WTC11 (cell line): ENCODE measurements at regions of chr1 and their contacts with region 1.

Region 1: GRCh38 chr1:229537894-229538293 is 20.6 kb downstream of the ABCB10 start:
- DNase-seq: no peak
- ATAC-seq: no peak
- H3K4me3 Mint-ChIP-seq: no peak overlapping the region
- H3K27ac Mint-ChIP-seq: peak overlapping the region; percentile 50; the same call in 1 of the 2 replicates
- H3K4me1 Mint-ChIP-seq: no peaks in the 10 kb centered on the region
- H3K27me3 Mint-ChIP-seq: no peaks in the 10 kb centered on the region
- CTCF ChIP-seq: no peak

Region 2: DNA sequence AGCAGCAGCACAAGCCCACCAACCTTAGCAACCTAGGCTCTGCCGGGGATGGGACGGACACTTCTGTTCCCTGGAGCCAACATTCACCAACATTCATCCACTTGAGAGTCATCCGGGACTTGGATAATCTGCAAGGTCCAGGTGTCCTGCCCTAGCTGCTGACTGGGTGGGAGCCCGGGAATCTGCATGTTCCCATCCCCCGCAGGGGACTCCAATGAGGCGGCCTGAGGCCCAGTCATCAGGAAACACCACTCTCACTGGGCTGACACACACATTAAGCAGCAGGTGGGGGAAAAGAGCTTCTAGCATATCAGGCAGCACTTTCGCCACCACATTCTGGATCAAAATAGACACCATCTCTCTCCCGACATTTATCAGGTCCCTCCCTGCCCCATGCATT is 156.7 kb before region 1 on chr1:
- CTCF ChIA-PET with region 1: no interaction called
- POLR2A ChIA-PET with region 1: interaction called, 10 read pairs
- DNase-seq: peak; percentile 50
- ATAC-seq: peak; percentile 54
- H3K4me3 Mint-ChIP-seq: no peak overlapping the region
- H3K27ac Mint-ChIP-seq: no peak overlapping the region
- H3K4me1 Mint-ChIP-seq: peaks cover 33% of the 10 kb centered on the region
- H3K27me3 Mint-ChIP-seq: peaks cover 5% of the 10 kb centered on the region
- CTCF ChIP-seq: no peak

Region 3: DNA sequence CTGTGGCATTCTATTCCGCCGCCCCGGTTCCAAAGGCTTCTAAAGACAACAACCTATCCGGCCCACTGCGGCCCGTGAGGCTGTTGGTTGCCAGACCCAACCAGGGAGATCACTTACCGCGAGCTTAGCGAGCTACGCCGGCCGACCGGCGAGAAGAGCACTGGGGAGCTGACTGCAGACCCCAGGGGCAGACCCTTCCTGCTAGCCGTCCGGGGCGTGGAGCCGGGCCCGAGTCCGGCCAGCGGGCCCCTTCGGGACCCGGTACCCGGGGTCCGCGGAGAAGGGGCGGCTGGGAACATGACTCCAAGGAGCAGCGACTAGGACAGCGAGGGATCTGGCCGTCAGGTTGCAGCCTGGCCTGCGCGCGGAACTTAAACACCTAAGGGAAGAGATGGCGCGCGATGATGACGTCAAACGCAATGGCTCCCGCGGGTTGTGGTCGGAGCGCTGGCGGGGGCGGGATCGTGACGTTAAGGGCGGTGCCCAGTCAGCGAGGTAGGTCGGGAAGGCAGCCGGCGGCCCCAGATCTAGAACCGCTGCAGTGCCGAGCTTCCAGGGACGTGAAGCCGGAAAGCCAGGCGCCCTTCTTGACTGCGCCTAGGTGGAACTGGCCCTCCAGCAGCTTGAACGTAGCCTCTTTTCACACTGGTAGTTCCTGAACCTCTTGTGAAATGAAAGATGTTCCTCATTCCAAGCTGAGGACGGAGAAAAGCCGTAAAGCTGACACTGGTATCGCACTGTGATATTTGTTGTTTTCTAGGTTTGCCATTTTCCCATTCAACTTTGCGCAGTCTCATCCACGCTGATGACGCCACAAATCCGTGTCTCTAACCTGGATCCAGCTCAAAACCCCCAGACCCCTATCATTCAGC is 29.7 kb before region 1 on chr1 and contains the start of gene NUP133:
- CTCF ChIA-PET with region 1: no interaction called
- POLR2A ChIA-PET with region 1: no interaction called
- DNase-seq: peak; percentile 99
- ATAC-seq: peak; percentile 97
- H3K4me3 Mint-ChIP-seq: peak within 1 kb of the TSS; percentile 95
- H3K27ac Mint-ChIP-seq: peak within 1 kb of the TSS; percentile 98
- H3K4me1 Mint-ChIP-seq: peaks cover 15% of the 10 kb centered on the region
- H3K27me3 Mint-ChIP-seq: no peaks in the 10 kb centered on the region; the same call in 1 of the 2 replicates
- CTCF ChIP-seq: no peak
- total RNA-seq, gene NUP133: 66.9 to 73.7 TPM (median 67.8 TPM) in 3 replicates

Region 4: DNA sequence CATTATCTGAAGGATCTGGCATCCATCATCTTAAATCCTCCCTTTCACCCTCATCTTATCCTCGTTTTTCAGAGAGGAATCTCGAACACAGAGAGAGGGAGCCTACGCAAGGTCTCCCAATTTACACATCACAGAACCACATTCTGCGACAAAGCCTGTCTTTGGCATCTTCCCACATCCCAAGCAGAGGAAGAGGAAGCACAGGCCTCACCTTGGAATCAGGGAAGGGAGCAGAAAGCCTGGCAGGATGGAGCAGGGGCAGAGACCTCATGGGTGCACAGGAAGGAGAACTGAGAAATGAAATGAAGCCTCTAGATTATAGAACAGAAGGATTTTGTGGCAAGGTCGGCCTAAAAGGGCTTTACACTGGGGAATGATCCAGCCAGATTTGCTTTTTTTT is 14.8 kb after region 1 on chr1:
- CTCF ChIA-PET with region 1: no interaction called
- POLR2A ChIA-PET with region 1: no interaction called
- DNase-seq: no peak
- ATAC-seq: no peak
- H3K4me3 Mint-ChIP-seq: no peak overlapping the region
- H3K27ac Mint-ChIP-seq: no peak overlapping the region
- H3K4me1 Mint-ChIP-seq: peaks cover 25% of the 10 kb centered on the region
- H3K27me3 Mint-ChIP-seq: no peaks in the 10 kb centered on the region
- CTCF ChIP-seq: no peak